ENCODE measurements at regions of chr5 and their contacts with region 1.

Region 1: DNA sequence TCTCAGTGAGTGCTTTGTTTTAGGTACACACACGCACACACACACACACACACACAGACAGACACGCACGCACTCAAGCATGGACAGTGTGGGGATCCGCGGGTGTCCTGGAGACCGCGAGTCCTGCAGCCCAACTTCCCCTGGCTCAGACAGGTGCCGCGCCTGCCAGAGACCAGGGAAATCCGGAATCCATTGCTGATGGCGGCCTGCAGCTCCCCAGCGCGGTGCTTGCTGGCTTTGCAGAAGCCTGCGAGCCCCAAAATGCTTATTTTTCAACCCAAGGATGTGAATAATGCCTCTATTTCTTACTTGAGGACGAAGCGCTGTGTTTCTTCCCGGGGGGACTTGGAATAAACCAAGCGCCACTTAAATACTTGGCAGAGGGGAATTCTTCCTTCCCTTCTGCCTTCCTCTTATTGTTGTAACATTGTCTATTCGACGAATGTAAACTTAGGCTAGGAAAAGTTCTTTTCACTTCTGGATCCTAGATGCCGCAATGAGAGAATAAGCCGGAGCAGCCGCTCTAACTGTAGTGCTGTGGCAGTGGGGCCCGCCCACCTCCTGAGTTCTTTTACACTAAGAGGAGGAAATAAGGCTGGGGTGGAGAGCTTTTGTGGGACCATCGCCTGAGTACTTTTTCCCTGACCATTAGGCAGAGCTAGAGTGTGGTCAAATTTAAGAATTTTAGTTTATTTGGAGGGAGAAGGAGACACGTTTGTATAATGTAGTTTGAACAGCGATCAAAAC is 802 bp downstream of the ITGA2 start:
- DNase-seq: peak; percentile 67
- ATAC-seq: peak; percentile 56
- H3K4me3 Mint-ChIP-seq: peak overlapping the region; percentile 81
- H3K27ac Mint-ChIP-seq: peak overlapping the region; percentile 67
- H3K4me1 Mint-ChIP-seq: peaks cover 56% of the 10 kb centered on the region
- H3K27me3 Mint-ChIP-seq: peaks cover 13% of the 10 kb centered on the region

Region 2: GRCh38 chr5:53041071-53041692 is 51.2 kb after region 1 on chr5:
- CTCF ChIA-PET with region 1: interaction called, 23 read pairs
- DNase-seq: peak; percentile 74
- ATAC-seq: peak; percentile 94
- H3K4me3 Mint-ChIP-seq: peak overlapping the region; percentile 67
- H3K27ac Mint-ChIP-seq: peak overlapping the region; percentile 93
- H3K4me1 Mint-ChIP-seq: peaks cover 88% of the 10 kb centered on the region
- H3K27me3 Mint-ChIP-seq: peaks cover 2% of the 10 kb centered on the region